Activated CD8-positive, alpha-beta T cell treated with anti-CD3 and anti-CD28 coated beads, Interleukin-2, amount 10 ng/mL, durations not matched to agents 7 days and 5 days (primary cell): ENCODE measurements at regions of chr2 and their contacts with region 1.

Region 1: GRCh38 chr2:108615480-108616090 is 81.3 kb downstream of the LIMS1 start:
- DNase-seq: no peak
- ATAC-seq: no peak
- H3K4me3 Mint-ChIP-seq: no peak overlapping the region
- H3K27ac Mint-ChIP-seq: peak overlapping the region; percentile 32
- H3K4me1 Mint-ChIP-seq: peaks cover 71% of the 10 kb centered on the region
- H3K27me3 Mint-ChIP-seq: no peaks in the 10 kb centered on the region

Region 2: GRCh38 chr2:108385411-108386071 is 230.0 kb before region 1 on chr2:
- CTCF ChIA-PET with region 1: no interaction called
- POLR2A ChIA-PET with region 1: no interaction called
- DNase-seq: no peak
- ATAC-seq: no peak
- H3K4me3 Mint-ChIP-seq: no peak overlapping the region
- H3K27ac Mint-ChIP-seq: no peak overlapping the region
- H3K4me1 Mint-ChIP-seq: peaks cover 6% of the 10 kb centered on the region
- H3K27me3 Mint-ChIP-seq: peaks cover 11% of the 10 kb centered on the region

Region 3: GRCh38 chr2:108629417-108629816 is 13.8 kb after region 1 on chr2:
- CTCF ChIA-PET with region 1: interaction called, 227 read pairs
- POLR2A ChIA-PET with region 1: interaction called, 7 read pairs
- DNase-seq: no peak
- ATAC-seq: peak; percentile 56
- H3K4me3 Mint-ChIP-seq: no peak overlapping the region
- H3K27ac Mint-ChIP-seq: peak overlapping the region; percentile 50
- H3K4me1 Mint-ChIP-seq: peaks cover 51% of the 10 kb centered on the region
- H3K27me3 Mint-ChIP-seq: no peaks in the 10 kb centered on the region